B cell (primary cell): ENCODE measurements at regions of chr1 and their contacts with region 1.

Region 1: GRCh38 chr1:178818416-178818815 is 52.5 kb downstream of the ANGPTL1 start:
- DNase-seq: no peak
- ATAC-seq: no peak
- H3K4me3 ChIP-seq: no peak overlapping the region
- H3K4me3 Mint-ChIP-seq: no peak overlapping the region
- H3K27ac ChIP-seq: peak overlapping the region in 1 of 2 donors; percentile 68
- H3K27ac Mint-ChIP-seq: peak overlapping the region; percentile 86
- H3K4me1 ChIP-seq: peaks cover 9 to 12% of the 10 kb centered on the region in 2 donors
- H3K4me1 Mint-ChIP-seq: peaks cover 55% of the 10 kb centered on the region
- H3K27me3 ChIP-seq: no peaks in the 10 kb centered on the region
- H3K27me3 Mint-ChIP-seq: no peaks in the 10 kb centered on the region
- CTCF ChIP-seq: no peak

Region 2: DNA sequence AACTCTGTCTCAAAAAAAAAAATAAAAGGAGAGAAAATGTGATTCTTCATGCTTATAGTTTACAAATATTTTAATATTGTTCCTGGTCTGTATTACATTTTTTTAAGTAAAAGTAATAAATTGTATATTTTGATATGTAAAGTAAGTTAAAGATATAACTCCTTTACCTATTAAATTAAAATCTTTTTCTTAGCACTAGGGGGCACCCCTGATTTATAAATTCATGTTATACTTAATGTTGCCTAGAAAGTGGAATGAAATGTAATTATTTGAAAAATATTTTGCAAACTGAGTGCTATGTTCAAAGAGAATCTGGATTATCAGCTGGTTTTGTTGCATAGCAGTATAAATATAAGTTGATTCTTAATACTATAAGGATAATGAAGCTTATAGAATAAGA is 44.2 kb before region 1 on chr1:
- CTCF ChIA-PET with region 1: interaction called, 3 read pairs
- POLR2A ChIA-PET with region 1: no interaction called
- intact Hi-C with region 1: loop called (anchors 10 kb)
- DNase-seq: no peak
- ATAC-seq: peak; percentile 33
- H3K4me3 ChIP-seq: no peak overlapping the region
- H3K4me3 Mint-ChIP-seq: no peak overlapping the region
- H3K27ac ChIP-seq: peak overlapping the region in 1 of 2 donors; percentile 56
- H3K27ac Mint-ChIP-seq: no peak overlapping the region
- H3K4me1 ChIP-seq: peaks cover 14 to 39% of the 10 kb centered on the region in 2 donors
- H3K4me1 Mint-ChIP-seq: peaks cover 51% of the 10 kb centered on the region
- H3K27me3 ChIP-seq: no peaks in the 10 kb centered on the region
- H3K27me3 Mint-ChIP-seq: no peaks in the 10 kb centered on the region
- CTCF ChIP-seq: peak; percentile 51

Region 3: DNA sequence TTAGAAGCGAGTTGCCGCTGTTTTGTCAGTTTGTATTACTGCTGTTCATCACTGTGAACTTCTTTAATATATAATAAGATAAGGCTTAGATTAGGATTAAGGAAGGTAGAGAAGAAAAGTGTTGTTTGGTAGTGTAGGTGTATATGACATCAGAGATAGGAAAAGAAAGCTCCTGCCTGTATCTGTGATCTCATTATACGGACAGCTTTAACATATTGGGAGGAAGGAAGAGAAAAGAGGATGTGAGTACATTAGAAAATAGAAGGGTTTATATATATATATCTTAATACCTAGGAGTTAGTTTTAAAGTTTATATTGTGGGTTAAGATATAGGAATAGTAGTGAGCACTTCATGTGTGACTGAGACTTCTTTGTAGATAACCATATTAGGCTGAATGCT is 22.4 kb before region 1 on chr1:
- CTCF ChIA-PET with region 1: no interaction called
- POLR2A ChIA-PET with region 1: no interaction called
- intact Hi-C with region 1: loop called (anchors 2 kb)
- DNase-seq: peak; percentile 48
- ATAC-seq: peak; percentile 67
- H3K4me3 ChIP-seq: no peak overlapping the region
- H3K4me3 Mint-ChIP-seq: peak overlapping the region; percentile 55
- H3K27ac ChIP-seq: peak overlapping the region; percentile 43 to 87
- H3K27ac Mint-ChIP-seq: peak overlapping the region; percentile 76
- H3K4me1 ChIP-seq: peaks cover 22 to 33% of the 10 kb centered on the region in 2 donors
- H3K4me1 Mint-ChIP-seq: peaks cover 48% of the 10 kb centered on the region
- H3K27me3 ChIP-seq: no peaks in the 10 kb centered on the region
- H3K27me3 Mint-ChIP-seq: no peaks in the 10 kb centered on the region
- CTCF ChIP-seq: no peak

Region 4: GRCh38 chr1:178849918-178850317 is 31.5 kb after region 1 on chr1:
- CTCF ChIA-PET with region 1: no interaction called
- POLR2A ChIA-PET with region 1: no interaction called
- intact Hi-C with region 1: loop called (anchors 5 kb)
- DNase-seq: no peak
- ATAC-seq: no peak
- H3K4me3 ChIP-seq: no peak overlapping the region
- H3K4me3 Mint-ChIP-seq: no peak overlapping the region
- H3K27ac ChIP-seq: no peak overlapping the region
- H3K27ac Mint-ChIP-seq: peak overlapping the region; percentile 32
- H3K4me1 ChIP-seq: no peaks in the 10 kb centered on the region
- H3K4me1 Mint-ChIP-seq: peaks cover 2% of the 10 kb centered on the region
- H3K27me3 ChIP-seq: no peaks in the 10 kb centered on the region
- H3K27me3 Mint-ChIP-seq: no peaks in the 10 kb centered on the region
- CTCF ChIP-seq: no peak